ENCODE measurements at regions of chr16 and their contacts with region 1.

Region 1: DNA sequence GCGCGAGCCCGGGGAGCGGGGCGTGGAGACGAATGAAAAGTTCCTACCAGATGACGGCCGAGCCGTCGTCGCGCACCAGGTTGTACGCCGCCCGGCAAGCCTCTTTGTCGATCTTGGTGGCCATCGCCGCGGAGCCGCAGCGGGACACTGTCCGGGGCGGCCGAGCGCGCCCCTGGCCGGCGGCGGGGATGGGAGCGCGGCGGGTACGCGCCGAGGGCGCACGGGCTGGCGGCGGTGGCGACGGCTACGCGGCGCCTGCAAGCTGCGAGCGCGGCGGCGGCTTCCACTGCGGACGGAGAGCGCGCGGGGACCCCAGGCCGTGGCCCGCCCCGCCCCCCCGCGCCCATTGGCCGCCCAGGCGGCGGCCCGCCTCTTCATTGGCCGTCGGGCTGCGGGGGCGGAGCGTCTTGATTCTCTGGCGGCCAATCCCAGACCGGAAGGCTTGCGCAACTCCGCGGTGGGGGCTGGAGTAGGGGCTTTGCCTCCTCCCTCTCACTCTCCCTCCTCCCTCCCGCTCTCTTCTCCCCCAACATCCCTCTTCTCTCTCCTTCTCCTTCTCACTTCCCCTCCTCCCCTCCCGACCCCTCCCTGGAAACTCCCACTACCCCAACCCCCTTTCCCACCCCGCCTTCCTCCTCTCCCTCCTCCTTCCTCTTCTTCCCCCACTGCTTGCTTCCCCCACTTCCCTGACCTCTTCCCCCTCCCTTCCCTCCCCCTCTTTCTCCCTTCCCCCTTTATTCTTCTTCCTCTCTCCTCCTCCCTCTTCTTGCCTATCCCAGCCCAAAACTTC is at the start of gene COTL1:
- DNase-seq: peak; percentile 95
- H3K4me3 Mint-ChIP-seq: peak within 1 kb of the TSS; percentile 97
- H3K27ac Mint-ChIP-seq: peak within 1 kb of the TSS; percentile 76
- H3K4me1 Mint-ChIP-seq: peaks cover 57% of the 10 kb centered on the region
- H3K27me3 Mint-ChIP-seq: peaks cover 16% of the 10 kb centered on the region
- total RNA-seq, gene COTL1: 676 to 689 TPM

Region 2: GRCh38 chr16:84511180-84511824 is 106.7 kb before region 1 on chr16:
- CTCF ChIA-PET with region 1: interaction called, 62 read pairs
- POLR2A ChIA-PET with region 1: interaction called, 69 read pairs
- DNase-seq: peak; percentile 79
- H3K4me3 Mint-ChIP-seq: no peak overlapping the region
- H3K27ac Mint-ChIP-seq: peak overlapping the region; percentile 99
- H3K4me1 Mint-ChIP-seq: peaks cover 81% of the 10 kb centered on the region
- H3K27me3 Mint-ChIP-seq: peaks cover 2% of the 10 kb centered on the region

Region 3: DNA sequence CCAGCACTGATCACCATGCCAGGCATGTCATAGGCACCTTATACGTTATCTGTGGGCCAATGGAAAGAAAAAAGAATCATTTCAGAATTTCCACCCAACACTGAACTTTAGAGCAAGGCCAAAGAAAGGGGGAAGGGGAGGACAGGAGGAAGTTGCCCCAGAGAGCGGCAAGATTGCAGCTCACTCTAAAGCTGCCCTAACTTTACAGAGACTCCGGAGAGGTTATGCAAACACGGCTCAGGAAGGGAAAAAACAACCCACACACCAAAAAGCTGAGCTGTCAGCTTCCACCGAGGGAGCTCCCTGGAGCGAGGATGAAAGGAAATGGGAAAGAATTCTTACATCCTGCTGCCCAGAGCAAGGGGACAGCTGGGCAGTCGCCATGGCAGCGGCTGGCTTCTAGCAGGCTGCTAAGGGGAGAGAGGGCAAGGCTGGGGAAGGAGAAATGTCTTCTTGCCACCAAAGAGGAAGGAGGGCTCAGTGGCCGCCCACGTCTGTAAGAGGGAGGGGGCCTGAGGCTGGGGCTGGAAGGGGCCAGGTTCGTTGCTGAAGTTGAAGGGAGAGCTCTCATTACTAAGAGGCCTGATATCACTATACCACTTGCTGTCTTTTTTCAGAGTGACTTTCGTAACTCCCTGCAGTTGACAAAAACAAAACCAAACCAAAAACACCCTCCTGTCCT is 18.3 kb before region 1 on chr16:
- CTCF ChIA-PET with region 1: interaction called, 8 read pairs
- POLR2A ChIA-PET with region 1: interaction called, 216 read pairs
- DNase-seq: peak; percentile 59
- H3K4me3 Mint-ChIP-seq: peak overlapping the region; percentile 73
- H3K27ac Mint-ChIP-seq: peak overlapping the region; percentile 96
- H3K4me1 Mint-ChIP-seq: peaks cover 93% of the 10 kb centered on the region
- H3K27me3 Mint-ChIP-seq: no peaks in the 10 kb centered on the region

Region 4: DNA sequence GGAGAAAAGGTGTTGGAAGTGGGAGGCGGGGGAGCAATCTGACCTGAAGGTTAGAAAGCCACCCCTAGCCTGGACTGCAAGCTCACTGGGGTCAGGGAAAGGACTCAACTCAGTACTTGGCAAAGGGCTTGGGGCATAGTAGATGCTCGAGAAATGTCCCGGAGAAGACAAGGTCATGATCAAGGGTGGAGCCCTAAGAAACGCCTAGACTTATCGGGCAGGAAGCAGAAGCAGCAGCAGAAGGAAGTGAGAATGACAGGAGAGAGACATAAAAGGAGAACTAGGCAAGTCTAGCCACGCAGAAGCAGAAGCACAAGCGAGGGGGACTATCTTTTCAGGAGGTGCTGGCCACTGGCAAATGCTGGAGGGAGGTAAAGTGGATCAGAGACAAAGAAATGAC is 10.3 kb before region 1 on chr16:
- CTCF ChIA-PET with region 1: interaction called, 14 read pairs
- POLR2A ChIA-PET with region 1: interaction called, 216 read pairs
- DNase-seq: peak; percentile 51
- H3K4me3 Mint-ChIP-seq: peak overlapping the region; percentile 70
- H3K27ac Mint-ChIP-seq: peak overlapping the region; percentile 92
- H3K4me1 Mint-ChIP-seq: peaks cover 94% of the 10 kb centered on the region
- H3K27me3 Mint-ChIP-seq: no peaks in the 10 kb centered on the region

Measured in activated CD4-positive, alpha-beta memory T cell treated with anti-CD3 and anti-CD28 coated beads, Interleukin-2, amount 10 ng/mL, durations not matched to agents 7 days and 5 days (primary cell).